ENCODE measurements at regions of chr14 and their contacts with region 1.

Region 1: GRCh38 chr14:103546652-103547454 is 15.6 kb downstream of the BAG5 start:
- DNase-seq: no peak
- ATAC-seq: peak; percentile 93
- H3K4me3 ChIP-seq: no peak overlapping the region
- H3K27ac ChIP-seq: no peak overlapping the region
- H3K4me1 ChIP-seq: no peaks in the 10 kb centered on the region
- H3K27me3 ChIP-seq: no peaks in the 10 kb centered on the region
- CTCF ChIP-seq: peak; percentile 85 to 96 (median 90); a peak in 5 of 6 replicates
- EP300 ChIP-seq: no peak
- POLR2A ChIP-seq: no peak
- RAD21 ChIP-seq: peak; percentile 93

Region 2: DNA sequence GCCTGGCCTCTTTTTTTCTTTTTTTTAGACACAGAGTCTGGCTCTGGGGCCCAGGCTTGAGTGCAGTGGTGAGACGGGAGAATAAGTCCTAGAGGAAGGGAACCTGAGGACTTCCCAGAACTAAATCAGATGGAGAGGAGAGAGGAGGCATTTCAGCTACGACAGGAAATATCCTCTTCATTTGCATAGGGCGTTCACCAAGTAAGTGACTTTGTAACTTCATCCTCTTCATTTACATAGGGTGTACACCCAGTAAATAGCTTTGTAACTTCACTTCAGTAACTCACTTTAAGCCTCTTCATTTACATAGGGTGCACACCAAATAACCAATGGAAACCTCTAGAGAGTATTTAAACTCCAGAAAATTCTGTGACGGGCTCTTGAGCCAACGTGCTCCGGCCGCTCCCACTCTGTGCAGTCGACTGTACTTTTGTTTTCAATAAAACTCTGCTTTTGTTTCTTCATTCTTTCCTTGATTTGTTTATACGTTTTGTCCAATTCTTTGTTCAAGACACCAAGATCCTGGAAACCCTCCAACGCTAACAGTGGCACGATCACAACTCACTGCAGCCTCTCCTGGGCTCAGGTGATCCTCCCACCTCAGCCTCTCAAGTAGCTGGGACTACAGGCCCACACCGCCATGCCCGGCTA is 1015.9 kb before region 1 on chr14:
- CTCF ChIA-PET with region 1: no interaction called
- POLR2A ChIA-PET with region 1: no interaction called
- RAD21 ChIA-PET with region 1: no interaction called
- SMC1A ChIA-PET with region 1: no interaction called
- in situ Hi-C with region 1: no loop called
- intact Hi-C with region 1: no loop called
- DNase-seq: no peak
- ATAC-seq: peak; percentile 38
- H3K4me3 ChIP-seq: no peak overlapping the region
- H3K27ac ChIP-seq: no peak overlapping the region
- H3K4me1 ChIP-seq: no peaks in the 10 kb centered on the region; the same call in none of the 2 replicates
- H3K27me3 ChIP-seq: no peaks in the 10 kb centered on the region
- CTCF ChIP-seq: no peak
- EP300 ChIP-seq: no peak
- POLR2A ChIP-seq: no peak
- RAD21 ChIP-seq: no peak

Region 3: GRCh38 chr14:103155013-103155412 is 391.8 kb before region 1 on chr14:
- CTCF ChIA-PET with region 1: no interaction called
- POLR2A ChIA-PET with region 1: no interaction called
- RAD21 ChIA-PET with region 1: no interaction called
- SMC1A ChIA-PET with region 1: no interaction called
- in situ Hi-C with region 1: no loop called
- intact Hi-C with region 1: no loop called
- DNase-seq: no peak
- ATAC-seq: peak; percentile 85
- H3K4me3 ChIP-seq: no peak overlapping the region
- H3K27ac ChIP-seq: no peak overlapping the region
- H3K4me1 ChIP-seq: no peaks in the 10 kb centered on the region; the same call in 1 of the 2 replicates
- H3K27me3 ChIP-seq: no peaks in the 10 kb centered on the region; a peak in 1 of 4 replicates
- CTCF ChIP-seq: no peak
- EP300 ChIP-seq: no peak
- POLR2A ChIP-seq: no peak
- RAD21 ChIP-seq: no peak

Region 4: DNA sequence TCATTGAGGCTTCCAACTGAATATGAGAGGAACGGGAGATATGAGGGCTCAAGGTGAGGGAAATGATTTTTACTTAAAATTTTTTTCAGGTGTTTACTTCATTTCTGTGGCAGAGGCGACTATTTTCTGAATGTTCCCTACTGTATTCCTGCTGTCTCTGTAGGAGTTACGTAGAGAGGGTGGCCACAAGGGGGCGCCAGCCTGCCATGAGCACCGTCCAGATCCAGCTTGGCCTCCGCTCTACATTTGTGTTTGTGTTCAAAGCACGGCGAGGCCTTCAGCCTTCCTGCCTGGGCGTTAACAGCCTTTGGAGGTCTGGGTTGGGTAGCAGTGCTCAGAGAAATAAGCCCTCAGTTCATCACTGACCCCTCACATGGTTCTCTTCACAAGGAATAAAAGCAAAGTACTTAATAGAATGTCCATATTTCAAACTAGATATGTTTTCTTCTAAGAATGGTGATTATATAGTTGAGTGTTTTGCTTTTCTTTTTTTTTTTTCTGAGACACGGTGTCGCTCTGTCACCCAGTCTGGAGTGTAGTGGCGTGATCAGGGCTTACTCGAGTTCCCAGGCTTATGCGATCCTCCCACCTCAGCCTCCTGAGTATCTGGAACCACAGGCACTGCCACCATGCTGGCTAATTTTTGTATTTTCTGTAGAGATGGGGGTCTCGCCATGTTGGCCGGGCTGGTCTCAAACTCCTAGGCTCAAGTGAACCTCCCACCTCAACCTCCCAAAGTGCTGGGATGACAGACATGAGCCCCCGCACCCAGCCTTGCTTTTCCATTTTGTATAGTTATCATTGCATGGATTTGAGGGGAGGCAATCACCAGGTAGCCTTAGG is 46.5 kb before region 1 on chr14:
- CTCF ChIA-PET with region 1: interaction called, 4 read pairs
- POLR2A ChIA-PET with region 1: no interaction called
- RAD21 ChIA-PET with region 1: interaction called, 4 read pairs
- SMC1A ChIA-PET with region 1: no interaction called
- in situ Hi-C with region 1: no loop called
- intact Hi-C with region 1: loop called (anchors 1 kb)
- DNase-seq: no peak
- ATAC-seq: peak; percentile 99
- H3K4me3 ChIP-seq: no peak overlapping the region
- H3K27ac ChIP-seq: no peak overlapping the region
- H3K4me1 ChIP-seq: no peaks in the 10 kb centered on the region
- H3K27me3 ChIP-seq: no peaks in the 10 kb centered on the region
- CTCF ChIP-seq: peak; percentile 81 to 94 (median 88)
- EP300 ChIP-seq: no peak
- POLR2A ChIP-seq: no peak
- RAD21 ChIP-seq: peak; percentile 42; the same call in 1 of the 2 replicates

Region 5: DNA sequence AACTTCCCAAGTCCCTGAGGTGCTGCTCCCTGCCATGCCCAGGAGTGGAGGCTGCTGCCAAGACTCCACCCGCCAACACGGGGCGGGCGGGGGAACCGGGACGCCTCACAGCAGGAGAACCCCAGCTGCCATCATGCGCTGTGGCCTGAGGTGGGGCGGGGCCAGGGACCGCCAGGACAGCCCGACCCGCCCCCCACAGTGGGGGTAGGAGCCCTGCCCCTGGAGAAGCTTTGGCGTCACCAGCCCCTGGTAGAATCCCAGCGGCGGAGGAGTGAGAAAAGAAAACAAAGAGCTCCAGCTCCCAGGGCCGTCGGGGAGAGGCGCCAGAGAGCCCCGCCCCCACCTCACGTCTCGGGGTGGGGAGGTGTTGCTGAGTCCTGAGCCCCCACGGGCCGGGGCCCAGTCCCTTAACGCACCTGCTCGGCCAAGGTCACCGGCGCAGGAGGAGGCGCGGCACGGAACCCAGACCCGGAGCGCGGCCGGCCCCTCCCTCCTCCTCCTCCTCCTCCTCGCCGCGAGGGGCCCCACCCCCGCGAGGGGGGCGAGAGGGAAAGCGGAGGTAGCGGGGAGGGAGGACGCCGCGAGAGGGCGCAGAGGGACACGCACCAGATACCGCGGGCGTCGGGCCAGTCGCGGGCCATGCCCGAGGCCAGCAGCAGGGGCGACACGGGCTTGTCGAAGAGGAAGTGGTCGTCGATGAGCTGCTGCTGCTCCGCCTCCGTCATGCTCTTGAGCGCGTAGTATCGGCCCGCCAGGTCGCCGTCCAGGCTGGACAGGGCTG is 26.0 kb before region 1 on chr14:
- CTCF ChIA-PET with region 1: interaction called, 53 read pairs
- POLR2A ChIA-PET with region 1: interaction called, 4 read pairs
- RAD21 ChIA-PET with region 1: interaction called, 25 read pairs
- SMC1A ChIA-PET with region 1: interaction called, 13 read pairs
- in situ Hi-C with region 1: no loop called
- intact Hi-C with region 1: loop called (anchors 1 kb)
- DNase-seq: no peak
- ATAC-seq: peak; percentile 69
- H3K4me3 ChIP-seq: peak overlapping the region; percentile 66
- H3K27ac ChIP-seq: no peak overlapping the region
- H3K4me1 ChIP-seq: peaks cover 25% of the 10 kb centered on the region
- H3K27me3 ChIP-seq: peaks cover 2% of the 10 kb centered on the region in 2 experiments; a peak in 2 of 4 replicates
- CTCF ChIP-seq: peak; percentile 38 to 63 (median 60); a peak in 4 of 6 replicates
- EP300 ChIP-seq: no peak
- POLR2A ChIP-seq: peak; percentile 64
- RAD21 ChIP-seq: 0 out of 2 replicates have a peak, but pooled peaks have one; percentile 12